ENCODE measurements at regions of chr4 and their contacts with region 1.

Region 1: GRCh38 chr4:147096667-147097604 is 151.3 kb upstream of the TTC29 start:
- DNase-seq: peak in 2 of 5 donors; percentile 30 to 39
- H3K4me3 ChIP-seq: no peak overlapping the region
- H3K4me3 Mint-ChIP-seq: no peak overlapping the region
- H3K27ac ChIP-seq: no peak overlapping the region
- H3K27ac Mint-ChIP-seq: no peak overlapping the region
- H3K4me1 ChIP-seq: no peaks in the 10 kb centered on the region
- H3K4me1 Mint-ChIP-seq: no peaks in the 10 kb centered on the region
- H3K27me3 ChIP-seq: peaks cover 7% of the 10 kb centered on the region
- H3K27me3 Mint-ChIP-seq: peaks cover 9 to 37% of the 10 kb centered on the region in 2 donors

Region 2: GRCh38 chr4:146342600-146343192 is 754.2 kb before region 1 on chr4:
- CTCF ChIA-PET with region 1: interaction called, 15 read pairs
- POLR2A ChIA-PET with region 1: no interaction called
- DNase-seq: peak in 2 of 5 donors; percentile 16 to 17
- H3K4me3 ChIP-seq: no peak overlapping the region
- H3K4me3 Mint-ChIP-seq: no peak overlapping the region
- H3K27ac ChIP-seq: no peak overlapping the region
- H3K27ac Mint-ChIP-seq: no peak overlapping the region
- H3K4me1 ChIP-seq: no peaks in the 10 kb centered on the region
- H3K4me1 Mint-ChIP-seq: peaks cover 4 to 6% (median 5%) of the 10 kb centered on the region in 3 donors
- H3K27me3 ChIP-seq: no peaks in the 10 kb centered on the region
- H3K27me3 Mint-ChIP-seq: no peaks in the 10 kb centered on the region

Region 3: DNA sequence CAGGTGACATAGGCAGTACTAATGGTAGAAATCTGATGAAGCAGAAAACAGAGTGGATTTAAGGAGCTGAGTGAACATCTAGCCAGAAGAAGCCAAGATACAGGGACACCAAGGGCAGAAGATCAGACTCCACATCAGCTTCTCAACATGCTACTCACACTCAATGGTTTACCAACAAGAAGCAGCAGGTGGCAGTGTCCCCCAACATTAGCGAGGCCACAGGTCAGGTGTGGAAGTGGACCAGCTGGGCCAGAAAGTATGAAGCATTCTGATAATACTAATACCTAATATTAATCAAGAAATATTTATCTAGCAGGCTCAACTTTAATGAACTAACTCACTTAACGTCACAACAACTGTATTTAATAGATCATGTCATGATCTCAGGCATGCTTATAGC is 77.9 kb before region 1 on chr4:
- CTCF ChIA-PET with region 1: interaction called, 20 read pairs
- POLR2A ChIA-PET with region 1: no interaction called
- DNase-seq: peak; percentile 2 to 52 (median 11)
- H3K4me3 ChIP-seq: no peak overlapping the region
- H3K4me3 Mint-ChIP-seq: no peak overlapping the region
- H3K27ac ChIP-seq: no peak overlapping the region
- H3K27ac Mint-ChIP-seq: no peak overlapping the region
- H3K4me1 ChIP-seq: no peaks in the 10 kb centered on the region
- H3K4me1 Mint-ChIP-seq: no peaks in the 10 kb centered on the region
- H3K27me3 ChIP-seq: no peaks in the 10 kb centered on the region
- H3K27me3 Mint-ChIP-seq: no peaks in the 10 kb centered on the region

Region 4: GRCh38 chr4:147052361-147052760 is 44.6 kb before region 1 on chr4:
- CTCF ChIA-PET with region 1: no interaction called
- POLR2A ChIA-PET with region 1: no interaction called
- DNase-seq: no peak
- H3K4me3 ChIP-seq: no peak overlapping the region
- H3K4me3 Mint-ChIP-seq: no peak overlapping the region
- H3K27ac ChIP-seq: no peak overlapping the region
- H3K27ac Mint-ChIP-seq: no peak overlapping the region
- H3K4me1 ChIP-seq: no peaks in the 10 kb centered on the region
- H3K4me1 Mint-ChIP-seq: peaks cover 5 to 6% (median 6%) of the 10 kb centered on the region in 3 donors
- H3K27me3 ChIP-seq: no peaks in the 10 kb centered on the region
- H3K27me3 Mint-ChIP-seq: peaks cover 3 to 40% of the 10 kb centered on the region in 2 donors